Activated CD4-positive, alpha-beta memory T cell treated with anti-CD3 and anti-CD28 coated beads for 36 hours (primary cell): ENCODE measurements at regions of chr2 and their contacts with region 1.

Region 1: DNA sequence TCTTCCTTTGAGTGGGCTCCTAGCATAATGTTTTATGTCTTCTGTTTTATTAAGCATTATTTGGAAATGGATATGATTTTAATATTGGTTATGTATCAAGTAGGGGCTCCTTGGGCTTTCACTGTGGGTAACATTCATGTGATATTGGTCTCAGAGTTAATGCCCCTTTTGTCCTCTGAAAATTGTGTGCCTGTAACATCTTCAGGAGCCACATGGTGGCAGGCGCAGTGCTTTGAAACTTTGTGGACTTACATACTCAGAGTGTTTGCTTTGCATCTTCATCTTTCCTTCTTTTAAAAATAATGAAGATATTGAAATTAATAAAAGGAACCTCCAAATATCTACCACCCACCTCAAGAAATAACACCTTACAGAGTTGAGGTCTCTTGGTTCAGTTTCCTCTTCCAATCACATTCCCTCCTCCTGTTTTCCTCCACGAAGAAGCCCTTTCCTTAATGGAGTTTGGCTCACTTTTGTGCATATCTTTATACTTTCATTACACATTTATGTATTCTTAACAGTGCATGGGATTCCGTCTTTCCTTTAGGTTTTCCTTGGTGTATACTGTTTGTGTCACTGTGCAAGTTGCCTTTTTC is 73.5 kb downstream of the LIMS1 start:
- DNase-seq: peak; percentile 69
- H3K4me3 Mint-ChIP-seq: no peak overlapping the region
- H3K27ac Mint-ChIP-seq: peak overlapping the region; percentile 16
- H3K4me1 Mint-ChIP-seq: peaks cover 54% of the 10 kb centered on the region
- H3K27me3 Mint-ChIP-seq: no peaks in the 10 kb centered on the region

Region 2: DNA sequence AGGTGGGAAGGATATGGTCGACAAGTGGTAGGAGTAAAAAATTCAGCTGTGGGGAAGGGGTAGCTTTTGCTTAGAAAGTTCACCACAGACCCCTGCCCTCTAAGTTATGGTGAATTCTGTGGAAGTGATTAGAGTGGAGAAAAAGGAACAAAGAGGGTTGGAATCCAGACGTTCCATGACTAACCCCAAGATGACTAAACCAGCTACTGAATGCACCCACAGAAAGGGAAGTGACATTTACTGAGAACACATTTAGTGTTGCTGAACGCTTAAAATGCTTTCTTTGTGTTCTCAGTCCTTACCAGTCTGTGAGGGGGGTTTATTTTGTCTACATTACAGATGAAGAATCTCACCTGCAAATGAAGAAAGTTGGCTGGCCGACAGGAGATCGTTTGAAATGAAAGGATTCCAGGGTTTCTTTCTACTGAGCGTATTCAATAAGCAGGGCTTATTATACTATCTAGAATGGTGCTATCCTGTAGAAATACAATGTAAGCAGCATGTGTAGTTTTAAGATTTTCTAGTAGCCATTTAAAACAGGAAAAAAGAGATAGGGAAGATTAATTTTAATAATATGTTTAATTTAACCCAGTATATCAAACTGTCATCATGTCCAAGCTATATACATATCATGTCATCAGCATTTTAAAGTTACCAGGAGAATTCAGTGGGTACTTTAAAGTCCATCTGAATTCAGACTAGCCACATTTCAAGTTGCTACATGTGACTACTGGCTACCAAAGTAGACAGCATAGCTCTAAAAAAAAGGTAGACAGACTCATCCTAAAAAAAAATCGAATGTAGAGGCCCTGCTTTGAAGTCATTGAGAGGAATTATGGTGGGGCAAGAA is 13.4 kb before region 1 on chr2:
- CTCF ChIA-PET with region 1: interaction called, 11 read pairs
- POLR2A ChIA-PET with region 1: interaction called, 3 read pairs
- intact Hi-C with region 1: loop called (anchors 1 kb)
- DNase-seq: no peak
- H3K4me3 Mint-ChIP-seq: peak overlapping the region; percentile 38
- H3K27ac Mint-ChIP-seq: peak overlapping the region; percentile 73
- H3K4me1 Mint-ChIP-seq: peaks cover 48% of the 10 kb centered on the region
- H3K27me3 Mint-ChIP-seq: no peaks in the 10 kb centered on the region

Region 3: DNA sequence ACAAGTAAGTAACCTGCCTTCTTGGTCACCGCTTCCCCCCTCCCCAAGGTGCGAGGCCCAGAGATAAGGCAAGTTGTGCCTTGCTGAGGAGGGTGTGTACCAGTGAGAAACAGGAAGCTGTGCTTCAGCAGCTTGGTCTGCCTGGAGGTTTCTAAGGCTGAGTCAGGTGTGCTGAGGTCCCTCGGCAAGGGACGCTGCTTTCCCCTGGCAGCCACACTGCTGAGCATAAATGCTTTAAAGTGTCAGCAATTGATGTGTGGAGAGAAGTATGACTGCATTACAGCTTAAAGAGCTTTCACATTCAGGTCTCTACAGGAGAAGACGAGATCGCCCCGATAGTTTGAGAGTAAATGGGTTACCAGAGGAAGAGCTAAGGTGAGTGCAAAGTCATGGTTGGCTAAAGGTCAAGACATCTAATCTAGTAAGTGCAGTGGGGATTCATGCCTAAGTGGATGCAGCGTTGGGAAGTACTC is 13.3 kb after region 1 on chr2:
- CTCF ChIA-PET with region 1: interaction called, 23 read pairs
- POLR2A ChIA-PET with region 1: interaction called, 70 read pairs
- intact Hi-C with region 1: loop called (anchors 1 kb)
- DNase-seq: peak; percentile 89
- H3K4me3 Mint-ChIP-seq: peak overlapping the region; percentile 85
- H3K27ac Mint-ChIP-seq: peak overlapping the region; percentile 97
- H3K4me1 Mint-ChIP-seq: peaks cover 81% of the 10 kb centered on the region
- H3K27me3 Mint-ChIP-seq: no peaks in the 10 kb centered on the region

Region 4: GRCh38 chr2:108629417-108629816 is 21.6 kb after region 1 on chr2:
- CTCF ChIA-PET with region 1: interaction called, 237 read pairs
- POLR2A ChIA-PET with region 1: interaction called, 70 read pairs
- intact Hi-C with region 1: loop called (anchors 1 kb)
- DNase-seq: no peak
- H3K4me3 Mint-ChIP-seq: peak overlapping the region; percentile 25
- H3K27ac Mint-ChIP-seq: peak overlapping the region; percentile 85
- H3K4me1 Mint-ChIP-seq: peaks cover 83% of the 10 kb centered on the region
- H3K27me3 Mint-ChIP-seq: no peaks in the 10 kb centered on the region

Region 5: GRCh38 chr2:108637304-108637669 is 29.5 kb after region 1 on chr2:
- CTCF ChIA-PET with region 1: interaction called, 237 read pairs
- POLR2A ChIA-PET with region 1: interaction called, 21 read pairs
- intact Hi-C with region 1: loop called (anchors 1 kb)
- DNase-seq: no peak
- H3K4me3 Mint-ChIP-seq: no peak overlapping the region
- H3K27ac Mint-ChIP-seq: peak overlapping the region; percentile 76
- H3K4me1 Mint-ChIP-seq: peaks cover 85% of the 10 kb centered on the region
- H3K27me3 Mint-ChIP-seq: no peaks in the 10 kb centered on the region

Region 6: DNA sequence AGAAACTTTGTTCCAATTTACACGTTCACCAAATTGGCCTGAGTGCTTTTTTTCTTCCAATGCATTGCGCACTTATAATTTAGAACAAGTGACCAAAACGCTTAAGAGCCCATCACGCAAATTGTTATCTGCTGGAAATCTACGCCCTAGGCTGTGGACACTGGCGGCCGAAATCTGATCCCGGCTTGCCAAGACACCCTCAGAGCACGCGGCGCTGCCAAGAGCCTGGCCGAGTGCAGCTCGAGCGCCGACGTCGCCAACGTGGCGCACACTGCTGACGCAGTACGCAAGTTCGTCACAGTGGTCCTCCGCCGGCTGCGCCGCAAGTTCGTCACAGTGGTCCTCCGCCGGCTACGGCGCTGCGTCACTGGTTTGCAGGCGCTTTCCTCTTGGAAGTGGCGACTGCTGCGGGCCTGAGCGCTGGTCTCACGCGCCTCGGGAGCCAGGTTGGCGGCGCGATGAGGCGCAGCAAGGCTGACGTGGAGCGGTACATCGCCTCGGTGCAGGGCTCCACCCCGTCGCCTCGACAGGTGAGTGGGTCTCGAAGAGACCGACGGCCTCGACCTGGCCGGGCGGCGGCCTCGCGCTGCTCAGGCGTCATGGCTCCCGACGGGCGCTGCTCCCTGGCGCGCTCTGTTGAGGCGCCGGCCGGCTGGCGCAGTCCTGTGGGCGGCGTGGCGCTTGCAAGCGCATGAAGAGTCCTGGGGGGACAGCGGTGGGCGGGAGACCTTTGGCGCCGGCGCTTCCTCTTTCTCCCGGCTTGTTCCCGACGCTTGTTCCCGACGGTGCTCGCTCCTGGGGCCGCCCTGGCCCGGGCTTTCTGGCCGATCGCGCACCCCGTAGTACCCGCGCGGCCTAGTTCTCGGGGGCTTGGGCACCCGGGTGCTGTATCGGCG is 111.6 kb after region 1 on chr2 and contains the start of gene RANBP2:
- CTCF ChIA-PET with region 1: no interaction called
- POLR2A ChIA-PET with region 1: no interaction called
- intact Hi-C with region 1: loop called (anchors 2 kb)
- DNase-seq: peak; percentile 96
- H3K4me3 Mint-ChIP-seq: peak within 1 kb of the TSS; percentile 93
- H3K27ac Mint-ChIP-seq: peak within 1 kb of the TSS; percentile 98
- H3K4me1 Mint-ChIP-seq: peaks cover 19% of the 10 kb centered on the region
- H3K27me3 Mint-ChIP-seq: no peaks in the 10 kb centered on the region
- total RNA-seq, gene RANBP2: 72.0 to 75.5 TPM

Region 7: GRCh38 chr2:109213646-109214417 is 606.0 kb after region 1 on chr2:
- CTCF ChIA-PET with region 1: no interaction called
- POLR2A ChIA-PET with region 1: no interaction called
- intact Hi-C with region 1: loop called (anchors 10 kb)
- DNase-seq: peak; percentile 75
- H3K4me3 Mint-ChIP-seq: peak overlapping the region; percentile 41
- H3K27ac Mint-ChIP-seq: peak overlapping the region; percentile 54
- H3K4me1 Mint-ChIP-seq: peaks cover 68% of the 10 kb centered on the region
- H3K27me3 Mint-ChIP-seq: peaks cover 84% of the 10 kb centered on the region